Heart right ventricle (tissue), 16 donors: ENCODE measurements at regions of chr17 and their contacts with region 1.

Region 1: GRCh38 chr17:30278032-30278431 is 13.7 kb downstream of the BLMH start:
- DNase-seq: peak in 1 of 2 donors; percentile 14
- ATAC-seq: peak in 7 of 8 donors; percentile 52 to 81 (median 69)
- H3K4me3 ChIP-seq: no peak overlapping the region
- H3K27ac ChIP-seq: no peak overlapping the region
- H3K4me1 ChIP-seq: peaks cover 0 to 14% (median 0%) of the 10 kb centered on the region in 9 donors
- H3K27me3 ChIP-seq: no peaks in the 10 kb centered on the region
- CTCF ChIP-seq: peak in 8 of 9 donors; percentile 26 to 69 (median 54)

Region 2: GRCh38 chr17:30062372-30062771 is 215.7 kb before region 1 on chr17:
- intact Hi-C with region 1: no loop called
- DNase-seq: no peak
- ATAC-seq: no peak
- H3K4me3 ChIP-seq: no peak overlapping the region
- H3K27ac ChIP-seq: no peak overlapping the region
- H3K4me1 ChIP-seq: no peaks in the 10 kb centered on the region
- H3K27me3 ChIP-seq: peaks cover 0 to 15% (median 6%) of the 10 kb centered on the region in 7 donors
- CTCF ChIP-seq: no peak

Region 3: DNA sequence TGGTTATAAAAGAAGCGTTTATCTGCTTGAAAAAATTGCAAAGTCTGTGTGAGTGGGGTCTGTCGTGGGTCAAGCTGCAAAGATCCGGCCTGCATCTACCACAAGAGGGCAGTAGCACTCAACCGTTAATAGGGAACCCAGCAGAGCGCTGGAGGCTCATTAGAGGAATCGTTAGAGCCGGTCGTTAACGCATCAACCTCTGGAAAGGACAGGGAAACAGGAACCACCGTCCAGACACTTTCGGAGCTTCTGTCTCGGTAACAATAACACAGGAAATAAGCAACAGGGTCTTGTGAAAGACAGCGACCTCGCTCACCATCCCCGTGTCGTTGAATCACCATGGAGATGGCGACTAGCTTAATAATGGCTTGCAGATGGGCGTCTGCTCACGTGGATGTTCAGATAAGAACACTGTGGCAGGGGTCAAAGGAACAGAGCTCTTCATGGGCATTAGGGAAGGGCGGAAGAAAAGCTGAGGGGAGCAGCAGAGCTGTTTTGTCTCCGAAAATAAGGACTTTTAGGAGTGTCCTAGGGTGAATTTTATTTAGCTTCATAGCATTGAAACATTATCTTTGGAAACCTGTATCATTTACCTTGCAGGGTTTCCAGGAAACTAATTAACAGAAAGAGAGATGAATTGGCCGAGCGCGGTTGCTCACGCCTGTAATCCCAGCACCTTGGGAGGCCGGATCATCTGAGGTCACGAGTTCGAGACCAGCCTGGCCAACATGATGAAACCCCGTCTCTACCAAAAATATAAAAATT is 173.3 kb before region 1 on chr17:
- intact Hi-C with region 1: loop called in 6 of 10 experiments (anchors 2 to 10 kb)
- DNase-seq: peak; percentile 54 to 84
- ATAC-seq: peak; percentile 92 to 99 (median 97)
- H3K4me3 ChIP-seq: peak overlapping the region in 9 of 10 donors; percentile 25 to 50 (median 48)
- H3K27ac ChIP-seq: peak overlapping the region in 5 of 10 donors; percentile 9 to 51 (median 35)
- H3K4me1 ChIP-seq: peaks cover 0 to 14% (median 0%) of the 10 kb centered on the region in 9 donors
- H3K27me3 ChIP-seq: no peaks in the 10 kb centered on the region
- CTCF ChIP-seq: peak; percentile 73 to 96 (median 92)

Region 4: GRCh38 chr17:30124273-30124796 is 153.7 kb before region 1 on chr17:
- intact Hi-C with region 1: loop called in 8 of 10 experiments (anchors 2 to 10 kb)
- DNase-seq: no peak
- ATAC-seq: no peak
- H3K4me3 ChIP-seq: no peak overlapping the region
- H3K27ac ChIP-seq: no peak overlapping the region
- H3K4me1 ChIP-seq: peaks cover 0 to 45% (median 17%) of the 10 kb centered on the region in 9 donors
- H3K27me3 ChIP-seq: no peaks in the 10 kb centered on the region
- CTCF ChIP-seq: no peak

Region 5: GRCh38 chr17:30134551-30134950 is 143.5 kb before region 1 on chr17:
- intact Hi-C with region 1: loop called in 5 of 10 experiments (anchors 5 to 10 kb)
- DNase-seq: no peak
- ATAC-seq: no peak
- H3K4me3 ChIP-seq: no peak overlapping the region
- H3K27ac ChIP-seq: no peak overlapping the region
- H3K4me1 ChIP-seq: peaks cover 0 to 31% (median 13%) of the 10 kb centered on the region in 9 donors
- H3K27me3 ChIP-seq: no peaks in the 10 kb centered on the region
- CTCF ChIP-seq: no peak

Region 6: GRCh38 chr17:30363715-30364202 is 85.7 kb after region 1 on chr17:
- intact Hi-C with region 1: no loop called
- DNase-seq: no peak
- ATAC-seq: peak in 5 of 8 donors; percentile 38 to 57 (median 49)
- H3K4me3 ChIP-seq: no peak overlapping the region
- H3K27ac ChIP-seq: peak overlapping the region in 1 of 10 donors; percentile 68
- H3K4me1 ChIP-seq: peaks cover 0 to 32% (median 0%) of the 10 kb centered on the region in 9 donors
- H3K27me3 ChIP-seq: no peaks in the 10 kb centered on the region
- CTCF ChIP-seq: no peak